ENCODE measurements at regions of chr21 and their contacts with region 1.

Region 1: DNA sequence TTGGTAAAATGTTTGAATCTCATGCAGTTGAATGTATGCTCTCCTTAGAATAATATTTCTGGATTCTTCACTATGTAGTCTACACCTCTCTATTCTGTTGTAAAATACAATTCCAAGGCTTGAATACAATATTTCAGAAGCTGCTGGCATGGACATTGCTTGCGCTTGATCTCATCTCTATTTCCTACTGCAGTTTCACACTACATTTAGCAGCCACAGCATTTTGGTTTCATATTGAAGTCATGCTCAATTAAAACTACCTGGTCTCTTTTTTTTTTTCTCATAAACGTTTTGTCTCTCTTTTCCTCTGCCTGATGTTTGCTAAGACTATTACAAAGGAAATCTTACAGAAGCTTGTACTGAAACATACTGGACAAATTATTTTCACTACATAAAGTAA is 631.0 kb upstream of the TMPRSS15 start:
- DNase-seq: no peak
- H3K4me3 ChIP-seq: no peak overlapping the region
- H3K27ac ChIP-seq: no peak overlapping the region
- H3K4me1 ChIP-seq: no peaks in the 10 kb centered on the region
- H3K27me3 ChIP-seq: no peaks in the 10 kb centered on the region
- CTCF ChIP-seq: no peak

Region 2: GRCh38 chr21:18114810-18115209 is 919.8 kb before region 1 on chr21:
- CTCF ChIA-PET with region 1: no interaction called
- POLR2A ChIA-PET with region 1: interaction called, 10 read pairs
- intact Hi-C with region 1: no loop called
- DNase-seq: no peak
- H3K4me3 ChIP-seq: no peak overlapping the region
- H3K27ac ChIP-seq: no peak overlapping the region
- H3K4me1 ChIP-seq: no peaks in the 10 kb centered on the region
- H3K27me3 ChIP-seq: no peaks in the 10 kb centered on the region
- CTCF ChIP-seq: no peak

Region 3: GRCh38 chr21:18545908-18546307 is 488.7 kb before region 1 on chr21:
- CTCF ChIA-PET with region 1: no interaction called
- POLR2A ChIA-PET with region 1: no interaction called
- intact Hi-C with region 1: no loop called
- DNase-seq: peak; percentile 1
- H3K4me3 ChIP-seq: no peak overlapping the region
- H3K27ac ChIP-seq: no peak overlapping the region
- H3K4me1 ChIP-seq: no peaks in the 10 kb centered on the region
- H3K27me3 ChIP-seq: no peaks in the 10 kb centered on the region
- CTCF ChIP-seq: no peak

Measured in A673 (cell line).